ENCODE measurements at regions of chr17 and their contacts with region 1.

Region 1: GRCh38 chr17:66426397-66427033 is 124.1 kb downstream of the PRKCA start:
- DNase-seq: peak in 8 of 9 donors; percentile 31 to 74 (median 64)
- ATAC-seq: peak; percentile 94
- H3K4me3 ChIP-seq: no peak overlapping the region
- H3K4me3 Mint-ChIP-seq: peak overlapping the region in 9 of 10 donors; percentile 4 to 68 (median 47)
- H3K27ac ChIP-seq: peak overlapping the region; percentile 30
- H3K27ac Mint-ChIP-seq: peak overlapping the region; percentile 56 to 91 (median 79)
- H3K4me1 ChIP-seq: peaks cover 0 to 28% of the 10 kb centered on the region in 2 donors
- H3K4me1 Mint-ChIP-seq: peaks cover 54 to 81% (median 72%) of the 10 kb centered on the region in 7 donors
- H3K27me3 ChIP-seq: no peaks in the 10 kb centered on the region
- H3K27me3 Mint-ChIP-seq: no peaks in the 10 kb centered on the region

Region 2: GRCh38 chr17:66200685-66201092 is 225.8 kb before region 1 on chr17:
- CTCF ChIA-PET with region 1: interaction called, 6 read pairs
- POLR2A ChIA-PET with region 1: interaction called, 4 read pairs
- intact Hi-C with region 1: loop called (anchors 1 to 2 kb)
- DNase-seq: peak in 7 of 9 donors; percentile 20 to 57 (median 55)
- ATAC-seq: peak; percentile 66
- H3K4me3 ChIP-seq: no peak overlapping the region
- H3K4me3 Mint-ChIP-seq: peak overlapping the region in 6 of 10 donors; percentile 21 to 66 (median 44)
- H3K27ac ChIP-seq: no peak overlapping the region
- H3K27ac Mint-ChIP-seq: peak overlapping the region in 8 of 9 donors; percentile 25 to 89 (median 69)
- H3K4me1 ChIP-seq: peaks cover 0 to 17% of the 10 kb centered on the region in 2 donors
- H3K4me1 Mint-ChIP-seq: peaks cover 12 to 26% (median 21%) of the 10 kb centered on the region in 7 donors
- H3K27me3 ChIP-seq: no peaks in the 10 kb centered on the region
- H3K27me3 Mint-ChIP-seq: peaks cover 0 to 4% (median 0%) of the 10 kb centered on the region in 5 donors

Region 3: DNA sequence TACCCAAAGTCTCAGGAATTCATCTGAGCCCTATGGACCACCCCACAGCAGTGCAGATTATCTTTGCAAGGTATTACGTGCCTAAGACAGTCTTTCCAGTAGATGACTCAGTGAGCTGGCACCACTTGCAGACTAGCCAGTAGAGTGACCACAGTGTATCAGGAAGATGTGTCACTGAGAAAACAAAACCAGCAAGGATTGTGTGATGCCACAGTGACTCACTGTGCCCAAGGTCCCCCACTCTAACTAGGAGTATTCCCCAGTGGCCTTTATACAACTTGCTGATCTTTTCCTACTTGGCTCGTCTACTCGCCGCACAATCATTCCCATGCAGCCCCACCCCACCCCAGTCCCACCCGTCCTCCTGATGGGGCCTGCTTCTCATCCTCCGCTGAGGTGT is 150.9 kb before region 1 on chr17:
- CTCF ChIA-PET with region 1: no interaction called
- POLR2A ChIA-PET with region 1: no interaction called
- intact Hi-C with region 1: no loop called
- DNase-seq: no peak
- ATAC-seq: no peak
- H3K4me3 ChIP-seq: no peak overlapping the region
- H3K4me3 Mint-ChIP-seq: no peak overlapping the region
- H3K27ac ChIP-seq: no peak overlapping the region
- H3K27ac Mint-ChIP-seq: no peak overlapping the region
- H3K4me1 ChIP-seq: no peaks in the 10 kb centered on the region
- H3K4me1 Mint-ChIP-seq: peaks cover 0 to 8% (median 0%) of the 10 kb centered on the region in 7 donors
- H3K27me3 ChIP-seq: no peaks in the 10 kb centered on the region
- H3K27me3 Mint-ChIP-seq: peaks cover 0 to 13% (median 0%) of the 10 kb centered on the region in 5 donors

Region 4: GRCh38 chr17:66290101-66290722 is 136.3 kb before region 1 on chr17:
- CTCF ChIA-PET with region 1: no interaction called
- POLR2A ChIA-PET with region 1: interaction called, 4 read pairs
- intact Hi-C with region 1: loop called in 1 of 2 experiments (anchors 1 kb)
- DNase-seq: no peak
- ATAC-seq: no peak
- H3K4me3 ChIP-seq: no peak overlapping the region
- H3K4me3 Mint-ChIP-seq: peak overlapping the region in 2 of 10 donors; percentile 11 to 59
- H3K27ac ChIP-seq: no peak overlapping the region
- H3K27ac Mint-ChIP-seq: peak overlapping the region in 1 of 9 donors; percentile 63
- H3K4me1 ChIP-seq: peaks cover 6 to 30% of the 10 kb centered on the region in 2 donors
- H3K4me1 Mint-ChIP-seq: peaks cover 18 to 51% (median 34%) of the 10 kb centered on the region in 7 donors
- H3K27me3 ChIP-seq: no peaks in the 10 kb centered on the region
- H3K27me3 Mint-ChIP-seq: no peaks in the 10 kb centered on the region

Region 5: DNA sequence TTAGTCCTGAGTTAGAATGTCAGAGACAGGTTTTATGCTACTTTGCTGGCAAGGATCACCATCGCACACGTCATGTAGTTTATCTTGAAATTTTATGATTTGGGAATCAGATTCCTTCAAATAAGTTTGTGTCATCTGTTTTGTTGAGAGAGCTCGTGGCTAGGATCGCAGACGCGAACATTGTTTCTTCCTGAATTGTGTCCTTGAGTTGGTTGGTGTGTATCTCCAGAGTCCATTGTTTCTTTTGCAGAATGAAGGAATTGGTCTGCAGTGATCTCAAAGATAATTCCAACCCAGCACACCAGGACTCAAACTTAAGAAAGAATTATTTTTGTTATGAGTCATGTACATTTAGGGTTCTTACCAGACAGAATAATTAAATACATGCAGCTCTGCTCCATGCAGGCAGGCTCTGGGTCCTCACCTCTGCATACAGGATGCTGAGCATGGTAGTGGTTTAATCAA is 72.5 kb before region 1 on chr17:
- CTCF ChIA-PET with region 1: no interaction called
- POLR2A ChIA-PET with region 1: no interaction called
- intact Hi-C with region 1: loop called in 1 of 2 experiments (anchors 2 kb)
- DNase-seq: no peak
- ATAC-seq: no peak
- H3K4me3 ChIP-seq: no peak overlapping the region
- H3K4me3 Mint-ChIP-seq: peak overlapping the region in 2 of 10 donors; percentile 36 to 37
- H3K27ac ChIP-seq: no peak overlapping the region
- H3K27ac Mint-ChIP-seq: peak overlapping the region in 2 of 9 donors; percentile 5 to 17
- H3K4me1 ChIP-seq: peaks cover 0 to 28% of the 10 kb centered on the region in 2 donors
- H3K4me1 Mint-ChIP-seq: peaks cover 45 to 97% (median 87%) of the 10 kb centered on the region in 7 donors
- H3K27me3 ChIP-seq: no peaks in the 10 kb centered on the region
- H3K27me3 Mint-ChIP-seq: no peaks in the 10 kb centered on the region

Region 6: GRCh38 chr17:66403846-66404556 is 22.5 kb before region 1 on chr17:
- CTCF ChIA-PET with region 1: no interaction called
- POLR2A ChIA-PET with region 1: interaction called, 4 read pairs
- intact Hi-C with region 1: loop called (anchors 2 kb)
- DNase-seq: peak in 2 of 9 donors; percentile 20
- ATAC-seq: no peak
- H3K4me3 ChIP-seq: no peak overlapping the region
- H3K4me3 Mint-ChIP-seq: peak overlapping the region; percentile 67 to 85 (median 72)
- H3K27ac ChIP-seq: peak overlapping the region; percentile 14
- H3K27ac Mint-ChIP-seq: peak overlapping the region; percentile 58 to 97 (median 89)
- H3K4me1 ChIP-seq: peaks cover 14 to 82% of the 10 kb centered on the region in 2 donors
- H3K4me1 Mint-ChIP-seq: peaks cover 69 to 96% (median 90%) of the 10 kb centered on the region in 7 donors
- H3K27me3 ChIP-seq: no peaks in the 10 kb centered on the region
- H3K27me3 Mint-ChIP-seq: no peaks in the 10 kb centered on the region

Region 7: GRCh38 chr17:66567234-66568170 is 141.0 kb after region 1 on chr17:
- CTCF ChIA-PET with region 1: no interaction called
- POLR2A ChIA-PET with region 1: interaction called, 3 read pairs
- intact Hi-C with region 1: loop called (anchors 1 to 5 kb)
- DNase-seq: peak; percentile 30 to 76 (median 65)
- ATAC-seq: peak; percentile 87
- H3K4me3 ChIP-seq: no peak overlapping the region
- H3K4me3 Mint-ChIP-seq: no peak overlapping the region
- H3K27ac ChIP-seq: no peak overlapping the region
- H3K27ac Mint-ChIP-seq: peak overlapping the region in 7 of 9 donors; percentile 3 to 87 (median 23)
- H3K4me1 ChIP-seq: peaks cover 0 to 14% of the 10 kb centered on the region in 2 donors
- H3K4me1 Mint-ChIP-seq: peaks cover 17 to 56% (median 51%) of the 10 kb centered on the region in 7 donors
- H3K27me3 ChIP-seq: no peaks in the 10 kb centered on the region
- H3K27me3 Mint-ChIP-seq: no peaks in the 10 kb centered on the region